Activated CD4-positive, alpha-beta T cell treated with anti-CD3 and anti-CD28 coated beads for 36 hours (primary cell): ENCODE measurements at regions of chr16 and their contacts with region 1.

Region 1: DNA sequence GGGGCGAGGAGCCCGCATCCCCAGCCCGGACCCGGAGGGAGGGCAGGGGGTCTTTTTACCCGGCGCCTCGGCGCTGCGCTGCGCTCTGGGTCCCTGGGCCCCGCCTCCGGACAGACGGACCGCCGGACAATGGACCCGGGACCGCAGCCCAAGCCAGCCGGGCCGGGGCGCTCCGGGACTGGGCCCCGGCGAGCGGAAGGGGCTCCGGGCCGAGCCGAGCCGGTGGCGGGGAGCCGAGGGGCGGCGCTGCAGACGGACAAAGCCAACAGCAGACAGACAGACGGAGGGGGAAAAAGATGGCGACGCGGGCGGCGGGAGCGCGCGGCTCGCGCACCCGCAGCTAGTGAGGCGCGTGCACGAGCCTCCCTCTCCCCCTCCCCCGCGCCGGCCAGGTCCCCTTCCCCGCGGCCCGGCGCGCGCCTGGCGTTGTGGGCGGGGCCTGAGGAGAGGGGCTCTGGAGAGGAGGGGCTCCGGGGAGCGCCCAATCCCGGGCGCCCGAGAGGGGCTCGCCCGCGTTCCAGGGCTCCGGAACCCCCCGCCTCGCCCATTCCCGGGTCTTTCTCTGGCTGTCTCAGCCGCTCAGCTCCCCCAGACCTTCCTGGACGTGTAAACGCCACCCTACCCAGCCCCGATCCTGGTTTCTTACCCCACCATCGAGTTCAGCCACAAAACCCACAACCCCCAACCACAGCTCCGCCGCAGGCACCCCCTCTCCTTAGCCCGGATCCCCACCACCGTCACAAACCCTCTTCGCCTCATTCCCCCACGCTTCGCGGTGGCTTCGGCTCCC is at the start of gene ZNF821:
- DNase-seq: peak; percentile 89
- ATAC-seq: peak; percentile 66
- H3K4me3 Mint-ChIP-seq: peak within 1 kb of the TSS; percentile 84
- H3K27ac Mint-ChIP-seq: peak within 1 kb of the TSS; percentile 84
- H3K4me1 Mint-ChIP-seq: peaks cover 48% of the 10 kb centered on the region
- H3K27me3 Mint-ChIP-seq: no peaks in the 10 kb centered on the region
- total RNA-seq, gene ZNF821: 6.0 to 7.7 TPM

Region 2: DNA sequence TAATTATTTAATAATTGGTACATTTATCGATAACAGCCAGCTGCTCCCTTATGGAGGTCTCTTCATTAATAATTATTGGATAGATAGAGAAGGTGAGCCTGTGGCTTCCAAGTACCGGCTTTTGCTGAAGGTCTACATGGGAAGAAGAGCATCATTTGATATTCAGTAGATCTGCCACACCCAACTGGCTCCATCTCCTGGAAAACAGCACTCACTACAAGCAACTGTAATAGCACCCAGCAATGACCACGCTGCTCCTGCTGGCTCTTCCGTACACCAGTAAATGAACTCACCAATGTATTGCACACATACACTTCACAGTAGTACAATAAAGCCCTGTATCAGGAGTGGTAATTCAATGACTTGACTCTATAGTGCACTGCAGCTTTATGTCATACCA is 238.6 kb before region 1 on chr16:
- CTCF ChIA-PET with region 1: no interaction called
- POLR2A ChIA-PET with region 1: no interaction called
- intact Hi-C with region 1: no loop called
- DNase-seq: peak; percentile 13
- ATAC-seq: peak; percentile 60
- H3K4me3 Mint-ChIP-seq: no peak overlapping the region
- H3K27ac Mint-ChIP-seq: no peak overlapping the region
- H3K4me1 Mint-ChIP-seq: no peaks in the 10 kb centered on the region
- H3K27me3 Mint-ChIP-seq: no peaks in the 10 kb centered on the region

Region 3: DNA sequence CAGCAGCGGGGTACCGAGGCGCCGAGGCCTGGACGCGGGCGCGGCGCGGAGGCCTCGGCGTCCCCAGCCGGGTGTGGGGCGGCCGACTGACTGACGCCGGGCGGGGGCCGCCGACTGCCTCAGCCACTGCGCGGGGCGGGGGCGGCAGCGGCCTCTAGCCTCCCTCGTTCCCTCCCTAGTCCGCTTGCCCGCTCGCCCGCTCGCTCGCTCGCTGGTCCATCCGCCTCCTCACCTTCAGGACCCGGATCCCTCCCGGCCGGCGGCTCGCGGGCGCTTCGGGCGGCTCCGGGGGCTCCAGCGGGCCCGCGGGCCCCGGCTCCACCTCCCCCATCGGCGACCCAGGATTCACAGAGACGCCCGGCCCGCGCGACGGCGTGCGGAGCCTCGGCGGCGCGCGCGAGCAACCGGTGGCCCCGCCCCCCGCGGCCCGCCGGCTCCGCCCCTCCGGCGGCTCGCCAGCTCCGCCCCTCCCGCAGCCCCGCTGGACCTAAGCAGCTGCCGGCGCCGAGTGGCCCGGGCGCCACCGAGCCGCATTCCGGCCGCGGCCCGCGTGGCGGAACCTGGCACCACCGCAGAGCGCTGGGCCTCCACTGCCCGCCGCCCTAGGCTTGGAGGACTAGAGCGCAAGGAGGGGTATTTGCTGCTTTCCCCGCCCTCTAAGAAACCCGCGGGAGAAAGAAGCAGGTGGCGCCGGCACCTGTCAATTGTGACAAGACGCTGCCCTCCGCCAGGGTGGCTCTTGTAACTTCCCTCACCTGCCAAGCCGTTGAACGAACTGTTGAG is 160.3 kb before region 1 on chr16:
- CTCF ChIA-PET with region 1: no interaction called
- POLR2A ChIA-PET with region 1: interaction called, 10 read pairs
- intact Hi-C with region 1: loop called (anchors 1 to 5 kb)
- DNase-seq: peak; percentile 87
- ATAC-seq: peak; percentile 87
- H3K4me3 Mint-ChIP-seq: peak overlapping the region; percentile 95
- H3K27ac Mint-ChIP-seq: peak overlapping the region; percentile 68
- H3K4me1 Mint-ChIP-seq: peaks cover 16% of the 10 kb centered on the region
- H3K27me3 Mint-ChIP-seq: no peaks in the 10 kb centered on the region

Region 4: DNA sequence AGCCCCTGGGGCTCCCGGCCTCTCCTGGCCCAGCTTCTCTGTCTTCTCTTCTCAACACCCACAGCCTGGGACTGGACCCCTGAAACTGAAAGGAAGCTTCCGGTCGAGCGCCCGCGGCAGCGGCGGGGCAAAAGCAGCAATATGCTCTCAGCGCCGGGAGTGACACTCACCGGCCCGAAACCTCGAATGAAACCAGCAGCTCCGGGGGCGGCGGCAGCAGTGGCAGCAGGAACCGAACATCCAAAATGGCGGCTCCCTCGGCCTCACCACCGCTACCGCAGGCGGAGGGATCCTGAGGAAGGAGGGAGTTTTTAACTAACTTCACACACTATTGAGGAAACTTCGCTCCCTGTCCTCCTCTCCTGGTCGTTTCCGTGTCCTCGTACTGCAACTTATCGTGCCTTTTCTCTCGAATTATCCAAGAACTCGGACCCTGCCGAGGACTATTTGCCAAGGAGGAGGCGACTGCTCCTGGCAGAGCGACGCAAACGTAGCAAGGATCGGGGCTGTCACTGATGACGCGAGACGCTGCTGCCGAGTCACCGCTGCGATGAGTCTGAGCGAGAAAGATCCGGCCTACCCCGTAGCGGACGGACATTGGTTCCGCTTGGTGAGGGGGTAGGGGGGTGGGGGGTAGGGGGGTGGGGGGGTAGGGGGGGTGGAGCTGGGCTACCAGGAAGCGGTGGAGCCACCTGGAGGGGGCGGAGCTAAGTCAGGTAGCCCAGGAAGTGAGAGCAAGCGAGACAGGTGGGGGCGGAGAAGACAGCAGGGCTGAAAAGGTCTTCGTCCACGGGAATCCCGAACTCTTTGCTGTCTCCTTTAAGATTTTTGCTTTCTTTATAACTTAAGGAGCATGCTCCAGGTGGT is 75.2 kb before region 1 on chr16 and contains the start of gene AP1G1:
- CTCF ChIA-PET with region 1: interaction called, 36 read pairs
- POLR2A ChIA-PET with region 1: interaction called, 11 read pairs
- intact Hi-C with region 1: loop called (anchors 1 kb)
- DNase-seq: peak; percentile 96
- ATAC-seq: peak; percentile 92
- H3K4me3 Mint-ChIP-seq: peak within 1 kb of the TSS; percentile 91
- H3K27ac Mint-ChIP-seq: peak within 1 kb of the TSS; percentile 100
- H3K4me1 Mint-ChIP-seq: peaks cover 48% of the 10 kb centered on the region
- H3K27me3 Mint-ChIP-seq: no peaks in the 10 kb centered on the region
- total RNA-seq, gene AP1G1: 65.5 to 68.8 TPM

Region 5: GRCh38 chr16:71853413-71853812 is 30.6 kb before region 1 on chr16:
- CTCF ChIA-PET with region 1: interaction called, 21 read pairs
- POLR2A ChIA-PET with region 1: no interaction called
- intact Hi-C with region 1: loop called in 1 of 2 experiments (anchors 5 kb)
- DNase-seq: no peak
- ATAC-seq: no peak
- H3K4me3 Mint-ChIP-seq: no peak overlapping the region
- H3K27ac Mint-ChIP-seq: peak overlapping the region; percentile 81
- H3K4me1 Mint-ChIP-seq: peaks cover 52% of the 10 kb centered on the region
- H3K27me3 Mint-ChIP-seq: no peaks in the 10 kb centered on the region

Region 6: GRCh38 chr16:71870818-71871217 is 13.2 kb before region 1 on chr16:
- CTCF ChIA-PET with region 1: interaction called, 83 read pairs
- POLR2A ChIA-PET with region 1: interaction called, 6 read pairs
- intact Hi-C with region 1: no loop called
- DNase-seq: no peak
- ATAC-seq: peak; percentile 20
- H3K4me3 Mint-ChIP-seq: no peak overlapping the region
- H3K27ac Mint-ChIP-seq: no peak overlapping the region
- H3K4me1 Mint-ChIP-seq: peaks cover 25% of the 10 kb centered on the region
- H3K27me3 Mint-ChIP-seq: no peaks in the 10 kb centered on the region

Region 7: DNA sequence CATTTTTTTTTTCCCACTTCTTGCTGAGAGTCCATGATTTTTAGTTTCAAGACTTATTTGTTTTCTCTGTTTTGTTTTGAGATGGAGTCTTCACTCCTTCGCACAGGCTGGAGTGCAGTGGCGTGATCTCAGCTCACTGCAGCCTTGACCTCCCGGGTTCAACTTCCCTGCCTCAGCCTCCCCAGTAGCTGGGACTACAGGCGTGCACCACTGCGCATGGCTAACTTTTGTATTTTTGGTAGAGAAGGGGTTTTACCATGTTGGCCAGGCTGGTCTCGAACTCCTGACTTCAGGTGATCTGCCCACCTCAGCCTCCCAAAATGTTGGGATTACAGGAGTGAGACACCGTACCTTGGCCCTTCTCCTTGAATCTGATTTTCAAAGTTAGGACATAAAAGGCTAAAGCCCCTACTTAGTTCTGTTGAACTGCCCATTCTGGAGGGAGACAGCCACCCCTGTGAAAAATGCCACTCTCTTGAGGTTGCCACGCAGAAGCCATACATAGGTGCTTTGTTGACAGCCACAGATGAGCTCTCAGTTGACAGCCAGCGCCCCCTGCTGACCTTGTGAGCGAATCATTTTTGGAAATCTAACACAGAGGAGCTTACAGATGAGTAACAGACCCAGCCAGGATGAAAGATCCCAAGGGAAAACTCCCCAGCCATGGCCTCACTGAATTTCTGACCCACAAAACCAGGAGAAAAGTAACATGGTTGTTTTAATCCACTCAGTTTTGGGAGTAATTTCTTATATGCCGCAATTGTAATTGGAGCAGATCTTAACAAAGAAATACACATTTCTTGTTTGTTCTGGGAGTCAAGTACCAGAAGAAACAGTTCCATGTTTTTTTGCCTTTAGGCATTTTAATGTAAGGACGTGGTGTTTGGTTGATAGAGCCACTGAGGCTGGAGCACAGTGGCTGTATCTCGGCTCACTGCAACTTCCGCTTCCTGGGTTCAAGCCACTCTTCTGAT is 77.3 kb after region 1 on chr16:
- CTCF ChIA-PET with region 1: interaction called, 14 read pairs
- POLR2A ChIA-PET with region 1: interaction called, 7 read pairs
- intact Hi-C with region 1: loop called in 1 of 2 experiments (anchors 5 kb)
- DNase-seq: peak; percentile 92
- ATAC-seq: peak; percentile 97
- H3K4me3 Mint-ChIP-seq: no peak overlapping the region
- H3K27ac Mint-ChIP-seq: no peak overlapping the region
- H3K4me1 Mint-ChIP-seq: peaks cover 5% of the 10 kb centered on the region
- H3K27me3 Mint-ChIP-seq: no peaks in the 10 kb centered on the region

Region 8: DNA sequence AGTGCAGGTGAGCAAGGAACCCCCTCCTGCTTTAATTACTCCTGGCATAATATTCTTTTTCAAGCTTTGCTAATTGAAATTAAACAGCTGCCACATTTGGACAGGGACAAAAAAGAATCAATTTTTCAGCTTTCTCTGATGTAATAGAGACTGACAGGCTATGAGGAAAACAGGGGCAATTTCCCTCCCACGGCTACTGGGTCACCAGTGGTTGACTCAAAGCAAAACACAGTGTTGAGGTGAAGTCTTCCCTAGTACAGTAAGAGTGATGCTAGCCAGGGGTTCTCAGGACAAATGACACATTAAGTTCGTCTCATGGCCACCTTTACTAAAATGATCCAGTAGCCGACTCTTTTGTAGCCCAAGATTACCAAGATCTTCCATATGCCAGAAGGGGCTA is 326.5 kb after region 1 on chr16:
- CTCF ChIA-PET with region 1: no interaction called
- POLR2A ChIA-PET with region 1: no interaction called
- intact Hi-C with region 1: no loop called
- DNase-seq: peak; percentile 22
- ATAC-seq: no peak
- H3K4me3 Mint-ChIP-seq: no peak overlapping the region
- H3K27ac Mint-ChIP-seq: no peak overlapping the region
- H3K4me1 Mint-ChIP-seq: no peaks in the 10 kb centered on the region
- H3K27me3 Mint-ChIP-seq: no peaks in the 10 kb centered on the region